ENCODE measurements at regions of chr3 and their contacts with region 1.

Region 1: DNA sequence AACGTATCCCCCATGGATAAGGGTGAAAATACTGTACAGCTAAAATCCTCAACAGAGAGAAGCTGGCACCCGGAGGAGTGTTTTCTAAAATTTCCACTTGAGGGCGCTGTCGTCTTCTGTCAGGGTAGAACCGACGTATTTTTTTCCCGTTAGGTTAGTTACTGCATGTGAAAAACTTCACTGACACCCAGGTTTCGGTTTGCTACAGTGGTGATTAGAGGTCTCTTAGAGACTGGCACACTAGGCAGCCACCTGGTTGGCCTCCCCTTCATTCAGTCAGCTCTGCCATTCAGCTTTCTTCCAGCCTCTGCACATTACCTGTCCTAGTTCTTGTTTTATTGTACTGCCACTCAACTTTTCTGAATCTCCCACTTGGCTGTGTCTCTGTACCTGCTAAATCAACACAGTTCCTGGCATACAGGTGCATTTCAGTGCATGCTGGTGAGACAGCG is 18.4 kb downstream of the CCK start:
- DNase-seq: no peak
- ATAC-seq: no peak

Region 2: DNA sequence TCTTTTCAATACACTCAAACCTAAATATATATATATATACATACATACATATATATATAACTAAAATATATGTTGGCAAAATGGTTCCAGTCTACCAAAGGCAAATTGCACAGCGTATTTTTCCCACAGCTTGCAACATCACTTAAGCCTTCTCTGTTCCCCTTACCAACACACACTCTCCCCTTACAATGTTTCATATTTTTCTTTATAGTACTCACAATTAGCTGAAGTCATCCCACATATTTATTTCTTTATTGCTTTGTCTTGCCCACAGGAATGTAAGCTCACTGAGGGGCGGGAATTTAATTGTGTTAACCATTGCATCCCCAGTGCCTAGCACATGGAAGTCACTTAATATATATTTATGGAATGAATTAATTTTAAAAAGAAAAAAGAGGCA is 574.0 kb before region 1 on chr3:
- intact Hi-C with region 1: no loop called
- DNase-seq: no peak
- ATAC-seq: no peak

Region 3: GRCh38 chr3:42179110-42179725 is 68.4 kb before region 1 on chr3:
- intact Hi-C with region 1: no loop called
- DNase-seq: no peak
- ATAC-seq: peak; percentile 85

Region 4: GRCh38 chr3:42443819-42444436 is 196.3 kb after region 1 on chr3:
- intact Hi-C with region 1: loop called (anchors 5 kb)
- DNase-seq: peak; percentile 91
- ATAC-seq: peak; percentile 94

Measured in sciatic nerve (tissue), 2 donors.